GM12878 (cell line): ENCODE measurements at regions of chr2 and their contacts with region 1.

Region 1: DNA sequence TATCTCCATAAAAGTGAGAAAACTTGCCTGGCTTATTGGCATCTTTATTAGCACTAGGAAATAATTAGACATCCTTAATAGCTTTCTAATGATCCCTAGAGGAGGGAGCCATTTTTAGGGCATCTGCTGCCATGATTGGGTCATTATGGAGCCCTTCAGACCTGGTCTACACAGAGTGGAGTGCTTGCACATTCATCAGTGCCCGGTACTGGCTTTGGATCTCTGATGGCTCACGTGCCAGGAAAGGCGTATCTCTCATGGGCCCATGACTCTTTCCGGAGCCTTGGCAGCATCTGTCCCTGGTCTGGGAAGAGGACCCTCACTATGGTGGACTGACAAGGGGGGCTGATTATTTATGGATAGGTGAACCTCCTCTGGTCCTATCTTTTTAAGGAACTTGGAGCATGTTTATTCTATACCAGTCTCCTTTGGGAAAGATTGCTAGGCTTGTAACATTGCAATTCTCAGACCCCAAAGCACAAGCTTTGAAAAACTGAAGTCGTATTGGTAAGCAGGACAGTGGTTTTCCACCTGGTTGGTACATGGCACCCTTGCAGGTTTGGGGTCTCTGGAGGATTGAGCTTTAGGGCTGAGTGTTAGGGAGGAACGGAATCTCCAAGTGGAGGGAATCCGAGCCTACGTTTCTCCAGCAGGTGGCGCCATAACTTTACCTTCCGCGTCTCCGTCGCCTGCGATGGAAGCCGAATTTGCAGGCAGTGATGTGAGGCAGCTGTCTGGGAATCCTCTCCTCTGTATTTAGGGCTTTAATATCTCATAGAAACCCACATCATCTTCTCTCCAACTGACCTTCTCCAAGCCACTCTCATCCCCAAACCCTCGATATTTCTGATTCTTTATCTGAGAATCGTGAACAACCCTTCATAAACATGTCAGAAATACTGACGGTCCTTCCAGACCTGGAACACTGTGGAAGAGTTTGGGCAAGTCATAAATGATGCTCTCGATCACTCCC is 27.8 kb downstream of the SIX2 start:
- DNase-seq: no peak
- ATAC-seq: peak; percentile 92
- H3K4me3 ChIP-seq: no peak overlapping the region
- H3K27ac ChIP-seq: no peak overlapping the region
- H3K4me1 ChIP-seq: peaks cover 4% of the 10 kb centered on the region
- H3K27me3 ChIP-seq: no peaks in the 10 kb centered on the region; a peak in 1 of 4 replicates
- CTCF ChIP-seq: peak; percentile 76 to 89 (median 77)
- EP300 ChIP-seq: no peak
- POLR2A ChIP-seq: no peak
- RAD21 ChIP-seq: peak; percentile 92

Region 2: DNA sequence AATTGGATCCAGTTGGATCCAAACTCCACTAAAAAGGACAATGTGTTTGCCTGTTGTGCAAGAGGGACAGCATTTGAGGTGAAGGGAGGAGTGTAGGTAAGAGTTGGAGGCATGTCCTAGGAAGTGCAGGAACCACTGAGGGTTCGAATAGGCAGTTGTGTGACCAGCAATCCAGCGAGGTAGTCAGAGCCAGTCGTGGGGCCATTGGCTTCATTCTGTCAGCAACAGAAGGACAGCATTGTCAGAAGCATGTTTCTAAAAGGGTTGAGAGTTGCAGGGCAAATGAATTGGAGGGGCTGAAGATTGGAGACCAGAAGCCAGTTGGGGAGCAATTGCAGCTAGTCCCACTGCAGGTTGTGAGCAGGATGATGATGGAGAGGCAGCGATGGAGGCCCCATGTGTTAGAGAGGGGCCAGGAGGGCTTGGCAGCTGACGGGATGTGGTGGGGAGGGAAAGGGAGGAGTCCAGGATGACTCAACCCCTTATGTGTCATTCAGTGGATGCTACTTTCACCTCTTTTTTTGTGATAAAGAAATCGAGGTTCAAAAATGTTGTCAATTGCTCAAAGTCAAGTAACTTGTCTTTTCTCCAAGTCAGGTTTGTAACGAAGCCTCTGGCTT is 136.7 kb before region 1 on chr2:
- CTCF ChIA-PET with region 1: no interaction called
- POLR2A ChIA-PET with region 1: no interaction called
- RAD21 ChIA-PET with region 1: no interaction called
- SMC1A ChIA-PET with region 1: no interaction called
- in situ Hi-C with region 1: no loop called
- intact Hi-C with region 1: no loop called
- DNase-seq: no peak
- ATAC-seq: no peak
- H3K4me3 ChIP-seq: no peak overlapping the region
- H3K27ac ChIP-seq: no peak overlapping the region
- H3K4me1 ChIP-seq: no peaks in the 10 kb centered on the region
- H3K27me3 ChIP-seq: no peaks in the 10 kb centered on the region
- CTCF ChIP-seq: no peak
- EP300 ChIP-seq: no peak
- POLR2A ChIP-seq: no peak
- RAD21 ChIP-seq: no peak

Region 3: GRCh38 chr2:45439788-45440773 is 458.7 kb after region 1 on chr2:
- CTCF ChIA-PET with region 1: interaction called, 10 read pairs
- POLR2A ChIA-PET with region 1: no interaction called
- RAD21 ChIA-PET with region 1: interaction called, 11 read pairs
- SMC1A ChIA-PET with region 1: interaction called, 3 read pairs
- in situ Hi-C with region 1: no loop called
- intact Hi-C with region 1: no loop called
- DNase-seq: peak; percentile 12
- ATAC-seq: peak; percentile 87
- H3K4me3 ChIP-seq: no peak overlapping the region
- H3K27ac ChIP-seq: no peak overlapping the region
- H3K4me1 ChIP-seq: peaks cover 11% of the 10 kb centered on the region
- H3K27me3 ChIP-seq: no peaks in the 10 kb centered on the region
- CTCF ChIP-seq: peak in 2 of 3 experiments; percentile 5 to 18; a peak in 2 of 6 replicates
- EP300 ChIP-seq: no peak
- POLR2A ChIP-seq: no peak
- RAD21 ChIP-seq: peak; percentile 26; the same call in 1 of the 2 replicates

Region 4: GRCh38 chr2:45483997-45484396 is 502.6 kb after region 1 on chr2:
- CTCF ChIA-PET with region 1: interaction called, 5 read pairs
- POLR2A ChIA-PET with region 1: no interaction called
- RAD21 ChIA-PET with region 1: interaction called, 6 read pairs
- SMC1A ChIA-PET with region 1: interaction called, 18 read pairs
- in situ Hi-C with region 1: no loop called
- intact Hi-C with region 1: no loop called
- DNase-seq: no peak
- ATAC-seq: peak; percentile 72
- H3K4me3 ChIP-seq: no peak overlapping the region
- H3K27ac ChIP-seq: no peak overlapping the region
- H3K4me1 ChIP-seq: 0 out of 2 replicates have a peak, but pooled peaks cover 3% of the 10 kb centered on the region
- H3K27me3 ChIP-seq: no peaks in the 10 kb centered on the region
- CTCF ChIP-seq: 0 out of 6 replicates have a peak, but pooled peaks of 2 of the 3 experiments have one; percentile 10 to 12
- EP300 ChIP-seq: no peak
- POLR2A ChIP-seq: no peak
- RAD21 ChIP-seq: no peak

Region 5: GRCh38 chr2:45578056-45578809 is 596.8 kb after region 1 on chr2:
- CTCF ChIA-PET with region 1: interaction called, 35 read pairs
- POLR2A ChIA-PET with region 1: no interaction called
- RAD21 ChIA-PET with region 1: interaction called, 3 read pairs
- SMC1A ChIA-PET with region 1: interaction called, 4 read pairs
- in situ Hi-C with region 1: no loop called
- intact Hi-C with region 1: loop called (anchors 5 kb)
- DNase-seq: no peak
- ATAC-seq: peak; percentile 76
- H3K4me3 ChIP-seq: no peak overlapping the region
- H3K27ac ChIP-seq: no peak overlapping the region
- H3K4me1 ChIP-seq: no peaks in the 10 kb centered on the region
- H3K27me3 ChIP-seq: no peaks in the 10 kb centered on the region
- CTCF ChIP-seq: peak in 1 of 3 experiments; percentile 39; a peak in 2 of 6 replicates
- EP300 ChIP-seq: no peak
- POLR2A ChIP-seq: no peak
- RAD21 ChIP-seq: peak; percentile 49; the same call in 1 of the 2 replicates

Region 6: GRCh38 chr2:45637440-45637839 is 656.0 kb after region 1 on chr2:
- CTCF ChIA-PET with region 1: no interaction called
- POLR2A ChIA-PET with region 1: no interaction called
- RAD21 ChIA-PET with region 1: no interaction called
- SMC1A ChIA-PET with region 1: interaction called, 3 read pairs
- in situ Hi-C with region 1: loop called (anchors 10 kb)
- intact Hi-C with region 1: no loop called
- DNase-seq: peak; percentile 41
- ATAC-seq: peak; percentile 96
- H3K4me3 ChIP-seq: no peak overlapping the region
- H3K27ac ChIP-seq: no peak overlapping the region
- H3K4me1 ChIP-seq: no peaks in the 10 kb centered on the region; the same call in 1 of the 2 replicates
- H3K27me3 ChIP-seq: no peaks in the 10 kb centered on the region
- CTCF ChIP-seq: no peak
- EP300 ChIP-seq: peak; percentile 50 to 61; a peak in 3 of 4 replicates
- POLR2A ChIP-seq: no peak
- RAD21 ChIP-seq: no peak